ENCODE measurements at regions of chr11 and their contacts with region 1.

Region 1: GRCh38 chr11:47628026-47628425 is 14.3 kb downstream of the MTCH2 start:
- H3K4me3 Mint-ChIP-seq: no peak overlapping the region
- H3K27ac Mint-ChIP-seq: no peak overlapping the region
- H3K4me1 Mint-ChIP-seq: no peaks in the 10 kb centered on the region
- H3K27me3 Mint-ChIP-seq: no peaks in the 10 kb centered on the region

Region 2: GRCh38 chr11:47305734-47306483 is 322.1 kb before region 1 on chr11:
- intact Hi-C with region 1: loop called (anchors 5 kb)
- H3K4me3 Mint-ChIP-seq: no peak overlapping the region
- H3K27ac Mint-ChIP-seq: no peak overlapping the region
- H3K4me1 Mint-ChIP-seq: peaks cover 15% of the 10 kb centered on the region
- H3K27me3 Mint-ChIP-seq: no peaks in the 10 kb centered on the region